CD4-positive, alpha-beta T cell (primary cell): ENCODE measurements at regions of chr12 and their contacts with region 1.

Region 1: DNA sequence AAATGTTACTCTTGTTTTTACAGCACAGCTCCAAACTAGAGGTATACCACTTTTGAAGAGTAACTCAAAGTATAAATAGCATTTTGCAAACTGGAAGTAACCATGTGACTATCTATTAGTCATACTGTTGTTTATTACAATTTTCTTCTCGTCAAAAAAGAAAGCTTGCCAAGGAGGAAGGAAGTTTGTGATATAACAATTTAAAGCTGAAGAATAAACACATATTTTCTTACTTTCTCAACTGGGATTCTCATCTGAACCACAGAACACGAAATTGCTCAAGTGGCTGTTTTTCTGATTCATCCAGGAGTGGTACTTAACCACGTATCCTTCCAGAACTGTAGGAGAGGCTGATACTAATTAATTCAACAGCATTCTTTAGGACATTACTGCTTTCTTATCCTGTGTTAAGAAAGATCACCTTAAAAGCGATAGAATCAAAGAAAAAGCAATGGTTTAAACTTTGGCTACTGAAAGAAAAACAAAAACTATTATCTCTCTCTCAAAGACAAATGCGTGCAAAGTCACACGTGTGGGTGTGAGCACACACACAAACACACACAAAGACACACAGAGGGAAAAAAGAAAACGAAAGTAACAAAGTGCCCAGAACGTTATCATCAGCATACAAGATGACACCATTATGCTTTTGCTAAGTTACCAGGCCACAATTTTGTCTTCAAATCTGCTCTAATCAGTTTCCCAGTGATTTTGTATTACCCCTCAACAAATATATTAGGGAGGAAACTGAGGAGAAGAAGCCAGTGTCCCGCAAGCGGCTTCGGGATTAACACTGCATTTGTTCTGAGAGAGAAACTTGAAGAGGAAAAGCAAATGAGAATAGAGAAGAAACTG is at the start of gene CLEC2B:
- DNase-seq: peak in 4 of 14 experiments; percentile 33 to 86 (median 78)
- ATAC-seq: peak; percentile 68
- H3K4me3 ChIP-seq: peak within 1 kb of the TSS; percentile 76
- H3K4me3 Mint-ChIP-seq: peak within 1 kb of the TSS; percentile 92
- H3K27ac ChIP-seq: peak within 1 kb of the TSS; percentile 90 to 91
- H3K27ac Mint-ChIP-seq: peak within 1 kb of the TSS; percentile 98
- H3K4me1 ChIP-seq: peaks cover 7% of the 10 kb centered on the region
- H3K4me1 Mint-ChIP-seq: peaks cover 34% of the 10 kb centered on the region
- H3K27me3 ChIP-seq: no peaks in the 10 kb centered on the region
- H3K27me3 Mint-ChIP-seq: no peaks in the 10 kb centered on the region
- CTCF ChIP-seq: no peak
- total RNA-seq, gene CLEC2B: 152 to 155 TPM

Region 2: GRCh38 chr12:9673404-9674225 is 195.9 kb before region 1 on chr12:
- CTCF ChIA-PET with region 1: no interaction called
- POLR2A ChIA-PET with region 1: interaction called, 3 read pairs
- intact Hi-C with region 1: loop called in 1 of 2 experiments (anchors 5 kb)
- DNase-seq: peak in 10 of 14 experiments; percentile 18 to 79 (median 46)
- ATAC-seq: peak; percentile 38
- H3K4me3 ChIP-seq: peak overlapping the region; percentile 72
- H3K4me3 Mint-ChIP-seq: peak overlapping the region; percentile 87
- H3K27ac ChIP-seq: peak overlapping the region; percentile 77 to 88
- H3K27ac Mint-ChIP-seq: peak overlapping the region; percentile 90
- H3K4me1 ChIP-seq: peaks cover 37% of the 10 kb centered on the region
- H3K4me1 Mint-ChIP-seq: peaks cover 82% of the 10 kb centered on the region
- H3K27me3 ChIP-seq: no peaks in the 10 kb centered on the region
- H3K27me3 Mint-ChIP-seq: no peaks in the 10 kb centered on the region
- CTCF ChIP-seq: no peak

Region 3: DNA sequence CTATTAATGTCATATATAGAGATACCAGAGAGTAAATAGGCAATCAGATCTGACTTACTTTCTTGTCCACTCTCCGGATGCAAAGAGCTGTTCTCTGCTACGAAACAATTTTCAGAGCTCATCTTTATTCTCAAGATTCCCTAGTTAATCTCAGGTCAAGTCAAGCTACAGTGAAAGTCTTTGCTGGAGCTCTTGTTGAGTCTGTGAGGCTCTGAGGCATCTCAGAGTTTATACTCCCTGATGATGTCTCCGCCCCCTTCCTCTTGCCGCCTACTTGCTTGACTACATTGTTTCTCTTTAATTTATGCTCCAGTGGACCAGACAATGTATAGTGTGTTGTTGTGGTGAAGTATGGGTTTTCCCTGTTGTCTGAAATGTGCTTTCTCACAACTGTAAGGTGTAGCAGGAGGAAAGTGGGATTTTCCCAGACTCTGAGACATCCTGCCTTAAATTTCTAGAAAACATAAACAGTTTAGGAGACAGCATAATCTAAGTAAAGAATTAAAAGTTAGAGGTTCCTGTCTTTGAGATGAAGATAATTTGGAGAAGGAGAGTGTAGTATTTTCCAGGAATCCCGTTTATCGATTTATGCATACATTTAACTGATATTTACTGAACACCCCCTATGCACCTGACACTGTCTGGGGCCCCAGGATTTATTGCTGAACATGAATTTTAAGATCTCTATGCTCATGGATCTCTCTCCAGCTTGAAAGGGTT is 108.7 kb before region 1 on chr12 and contains the start of gene CD69:
- CTCF ChIA-PET with region 1: no interaction called
- POLR2A ChIA-PET with region 1: interaction called, 145 read pairs
- intact Hi-C with region 1: no loop called
- DNase-seq: peak; percentile 56 to 96 (median 69)
- ATAC-seq: peak; percentile 43
- H3K4me3 ChIP-seq: peak within 1 kb of the TSS; percentile 79
- H3K4me3 Mint-ChIP-seq: peak within 1 kb of the TSS; percentile 97
- H3K27ac ChIP-seq: peak within 1 kb of the TSS; percentile 98
- H3K27ac Mint-ChIP-seq: peak within 1 kb of the TSS; percentile 99
- H3K4me1 ChIP-seq: peaks cover 34% of the 10 kb centered on the region
- H3K4me1 Mint-ChIP-seq: peaks cover 68% of the 10 kb centered on the region
- H3K27me3 ChIP-seq: no peaks in the 10 kb centered on the region
- H3K27me3 Mint-ChIP-seq: no peaks in the 10 kb centered on the region
- CTCF ChIP-seq: no peak
- total RNA-seq, gene CD69: 631 to 659 TPM

Region 4: GRCh38 chr12:9851927-9852326 is 17.6 kb before region 1 on chr12:
- CTCF ChIA-PET with region 1: interaction called, 4 read pairs
- POLR2A ChIA-PET with region 1: interaction called, 26 read pairs
- intact Hi-C with region 1: no loop called
- DNase-seq: no peak
- ATAC-seq: no peak
- H3K4me3 ChIP-seq: no peak overlapping the region
- H3K4me3 Mint-ChIP-seq: no peak overlapping the region
- H3K27ac ChIP-seq: no peak overlapping the region
- H3K27ac Mint-ChIP-seq: no peak overlapping the region
- H3K4me1 ChIP-seq: no peaks in the 10 kb centered on the region
- H3K4me1 Mint-ChIP-seq: peaks cover 38% of the 10 kb centered on the region
- H3K27me3 ChIP-seq: no peaks in the 10 kb centered on the region
- H3K27me3 Mint-ChIP-seq: no peaks in the 10 kb centered on the region
- CTCF ChIP-seq: no peak

Region 5: GRCh38 chr12:9925708-9926393 is 56.3 kb after region 1 on chr12:
- CTCF ChIA-PET with region 1: no interaction called
- POLR2A ChIA-PET with region 1: interaction called, 4 read pairs
- intact Hi-C with region 1: loop called (anchors 1 to 5 kb)
- DNase-seq: peak in 5 of 14 experiments; percentile 9 to 70 (median 57)
- ATAC-seq: peak; percentile 48
- H3K4me3 ChIP-seq: peak overlapping the region; percentile 21
- H3K4me3 Mint-ChIP-seq: peak overlapping the region; percentile 51
- H3K27ac ChIP-seq: no peak overlapping the region
- H3K27ac Mint-ChIP-seq: no peak overlapping the region
- H3K4me1 ChIP-seq: no peaks in the 10 kb centered on the region
- H3K4me1 Mint-ChIP-seq: peaks cover 9% of the 10 kb centered on the region
- H3K27me3 ChIP-seq: no peaks in the 10 kb centered on the region
- H3K27me3 Mint-ChIP-seq: no peaks in the 10 kb centered on the region
- CTCF ChIP-seq: peak; percentile 75

Region 6: GRCh38 chr12:10341892-10342509 is 472.5 kb after region 1 on chr12:
- CTCF ChIA-PET with region 1: no interaction called
- POLR2A ChIA-PET with region 1: no interaction called
- intact Hi-C with region 1: no loop called
- DNase-seq: no peak
- ATAC-seq: no peak
- H3K4me3 ChIP-seq: no peak overlapping the region
- H3K4me3 Mint-ChIP-seq: no peak overlapping the region
- H3K27ac ChIP-seq: no peak overlapping the region
- H3K27ac Mint-ChIP-seq: no peak overlapping the region
- H3K4me1 ChIP-seq: no peaks in the 10 kb centered on the region
- H3K4me1 Mint-ChIP-seq: no peaks in the 10 kb centered on the region
- H3K27me3 ChIP-seq: no peaks in the 10 kb centered on the region
- H3K27me3 Mint-ChIP-seq: no peaks in the 10 kb centered on the region
- CTCF ChIP-seq: no peak

Region 7: GRCh38 chr12:10364815-10365622 is 495.5 kb after region 1 on chr12:
- CTCF ChIA-PET with region 1: no interaction called
- POLR2A ChIA-PET with region 1: interaction called, 3 read pairs
- intact Hi-C with region 1: loop called in 1 of 2 experiments (anchors 10 kb)
- DNase-seq: peak; percentile 23 to 87 (median 48)
- ATAC-seq: peak; percentile 81
- H3K4me3 ChIP-seq: peak overlapping the region; percentile 73
- H3K4me3 Mint-ChIP-seq: no peak overlapping the region
- H3K27ac ChIP-seq: peak overlapping the region; percentile 52 to 77
- H3K27ac Mint-ChIP-seq: no peak overlapping the region
- H3K4me1 ChIP-seq: peaks cover 18% of the 10 kb centered on the region
- H3K4me1 Mint-ChIP-seq: peaks cover 12% of the 10 kb centered on the region
- H3K27me3 ChIP-seq: no peaks in the 10 kb centered on the region
- H3K27me3 Mint-ChIP-seq: no peaks in the 10 kb centered on the region
- CTCF ChIP-seq: no peak